Dendritic cell treated with granulocyte-macrophage colony-stimulating factor and Interleukin-4, amounts not matched to agents 40 ng/mL and 50 ng/mL, for 4 days (primary cell): ENCODE measurements at regions of chr21 and their contacts with region 1.

Region 1: DNA sequence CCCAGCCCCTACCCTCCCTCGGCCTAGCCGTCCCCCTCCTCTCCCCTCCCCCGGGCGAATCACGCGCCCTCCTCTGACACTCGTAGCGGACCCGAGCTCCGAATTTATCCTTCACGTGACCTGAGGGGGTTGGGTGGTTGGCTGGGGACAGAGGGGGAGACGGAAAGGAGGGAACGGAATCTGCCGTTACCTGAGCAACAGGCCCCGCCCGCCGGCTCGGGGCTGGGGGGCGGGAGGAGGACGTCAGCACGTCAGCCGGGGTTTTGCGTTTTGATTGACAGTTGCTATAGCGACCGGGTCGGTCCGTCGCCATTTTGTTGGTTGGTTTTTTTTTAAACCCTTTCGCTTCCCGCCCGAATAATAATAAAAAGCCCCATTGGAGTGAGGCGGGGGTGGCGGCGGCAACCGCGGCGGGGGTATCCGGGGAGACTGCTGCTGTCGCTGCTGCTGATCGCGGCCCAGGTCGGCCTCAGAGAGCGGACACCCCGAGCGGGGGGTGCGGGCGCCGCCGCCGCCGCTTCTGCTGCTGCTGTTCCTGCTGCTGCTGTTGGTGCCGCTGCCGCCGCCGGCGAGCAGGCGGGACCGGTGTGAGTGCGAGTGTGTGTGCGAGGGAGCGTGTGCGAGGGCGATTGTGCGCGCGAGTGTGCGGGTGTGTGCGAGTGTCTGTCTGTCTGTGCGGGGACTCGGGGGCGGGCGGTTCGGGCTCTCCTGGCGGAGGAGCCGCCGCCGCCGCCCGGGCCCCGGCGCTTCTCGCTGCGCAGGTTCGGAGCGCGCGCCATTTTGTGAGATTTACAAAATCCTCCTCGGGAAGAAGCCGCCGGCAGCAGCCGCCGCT is at the start of gene DYRK1A:
- H3K4me3 Mint-ChIP-seq: peak within 1 kb of the TSS; percentile 98
- H3K27ac Mint-ChIP-seq: peak within 1 kb of the TSS; percentile 100
- H3K4me1 Mint-ChIP-seq: peaks cover 23% of the 10 kb centered on the region
- H3K27me3 Mint-ChIP-seq: no peaks in the 10 kb centered on the region

Region 2: DNA sequence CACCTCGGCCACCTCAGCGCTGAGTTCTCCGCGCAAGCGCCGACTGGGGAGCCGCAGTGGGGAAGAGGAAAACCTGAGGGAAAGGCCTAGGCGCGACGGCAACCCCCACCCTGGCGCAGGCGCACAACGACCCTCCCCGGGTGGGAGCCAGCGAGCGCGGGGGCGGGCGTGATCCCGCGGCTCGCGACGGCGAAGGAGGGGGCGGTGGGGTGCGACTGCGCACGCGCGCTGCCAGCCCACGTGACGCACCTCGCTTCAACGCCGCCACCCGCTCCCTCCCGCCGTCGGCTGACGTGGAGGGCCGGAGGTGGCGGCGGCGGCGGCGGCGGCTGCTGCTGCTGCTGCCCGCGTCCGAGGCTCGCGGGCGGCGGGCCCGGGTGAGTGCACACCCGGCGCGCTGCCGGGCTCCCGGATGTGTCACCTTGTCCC is 293.7 kb before region 1 on chr21 and contains the starts of genes PIGP and TTC3:
- intact Hi-C with region 1: loop called (anchors 10 kb)
- H3K4me3 Mint-ChIP-seq: peak within 1 kb of the TSS; percentile 96
- H3K27ac Mint-ChIP-seq: peak within 1 kb of the TSS; percentile 92
- H3K4me1 Mint-ChIP-seq: peaks cover 41% of the 10 kb centered on the region
- H3K27me3 Mint-ChIP-seq: no peaks in the 10 kb centered on the region

Region 3: GRCh38 chr21:37145635-37146111 is 221.0 kb before region 1 on chr21:
- intact Hi-C with region 1: no loop called
- H3K4me3 Mint-ChIP-seq: no peak overlapping the region
- H3K27ac Mint-ChIP-seq: no peak overlapping the region
- H3K4me1 Mint-ChIP-seq: no peaks in the 10 kb centered on the region
- H3K27me3 Mint-ChIP-seq: no peaks in the 10 kb centered on the region

Region 4: DNA sequence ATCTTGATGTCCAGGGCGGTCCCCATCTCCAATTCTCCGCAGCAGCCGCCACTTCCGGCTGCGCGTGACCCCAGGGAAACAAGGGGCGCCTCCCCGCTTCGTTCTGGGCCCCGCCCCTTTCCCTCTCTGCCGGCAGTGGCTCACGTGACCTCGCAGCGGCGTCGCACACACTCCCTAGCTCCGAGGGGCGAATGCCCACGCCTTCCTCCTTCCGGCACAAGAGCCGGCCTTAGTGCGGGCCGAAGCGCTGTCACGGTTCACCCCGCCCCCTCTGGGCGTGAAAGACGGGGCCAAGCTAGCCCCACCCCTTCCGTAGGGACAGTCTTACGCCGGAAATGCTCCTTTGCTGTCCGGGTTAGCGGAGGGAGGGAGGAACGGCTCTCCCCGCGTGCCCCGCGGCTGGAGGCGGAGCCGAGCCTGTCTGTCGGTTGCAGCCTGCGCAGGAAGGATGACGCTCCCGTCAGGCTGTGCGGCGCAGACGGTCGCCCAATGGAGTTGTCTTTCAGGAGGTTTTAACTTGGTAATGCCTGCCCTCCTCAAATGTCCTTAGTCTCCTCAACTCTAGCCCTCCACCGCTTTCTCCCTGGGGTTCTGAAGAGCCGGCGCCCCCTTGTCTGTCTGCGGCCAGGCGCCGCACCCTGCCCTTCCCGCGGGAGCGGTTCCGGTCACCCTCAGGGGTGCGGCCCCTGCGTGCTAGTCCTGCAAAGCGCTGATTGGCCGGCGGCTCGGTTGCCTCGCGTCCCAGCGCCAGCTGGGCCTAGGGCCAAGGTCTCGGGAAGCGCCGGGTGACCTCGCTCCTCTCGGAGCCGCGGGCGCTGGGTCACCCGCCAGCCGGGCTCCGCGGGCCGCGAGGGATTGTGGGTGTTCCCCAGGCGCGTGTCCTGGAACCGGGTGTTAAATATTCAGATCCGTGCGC is 99.2 kb before region 1 on chr21 and contains the start of gene VPS26C:
- intact Hi-C with region 1: loop called (anchors 1 kb)
- H3K4me3 Mint-ChIP-seq: peak within 1 kb of the TSS; percentile 88
- H3K27ac Mint-ChIP-seq: peak within 1 kb of the TSS; percentile 99
- H3K4me1 Mint-ChIP-seq: peaks cover 19% of the 10 kb centered on the region
- H3K27me3 Mint-ChIP-seq: no peaks in the 10 kb centered on the region

Region 5: GRCh38 chr21:37407719-37408420 is 41.2 kb after region 1 on chr21:
- intact Hi-C with region 1: loop called (anchors 5 kb)
- H3K4me3 Mint-ChIP-seq: no peak overlapping the region
- H3K27ac Mint-ChIP-seq: peak overlapping the region; percentile 38
- H3K4me1 Mint-ChIP-seq: peaks cover 59% of the 10 kb centered on the region
- H3K27me3 Mint-ChIP-seq: no peaks in the 10 kb centered on the region

Region 6: DNA sequence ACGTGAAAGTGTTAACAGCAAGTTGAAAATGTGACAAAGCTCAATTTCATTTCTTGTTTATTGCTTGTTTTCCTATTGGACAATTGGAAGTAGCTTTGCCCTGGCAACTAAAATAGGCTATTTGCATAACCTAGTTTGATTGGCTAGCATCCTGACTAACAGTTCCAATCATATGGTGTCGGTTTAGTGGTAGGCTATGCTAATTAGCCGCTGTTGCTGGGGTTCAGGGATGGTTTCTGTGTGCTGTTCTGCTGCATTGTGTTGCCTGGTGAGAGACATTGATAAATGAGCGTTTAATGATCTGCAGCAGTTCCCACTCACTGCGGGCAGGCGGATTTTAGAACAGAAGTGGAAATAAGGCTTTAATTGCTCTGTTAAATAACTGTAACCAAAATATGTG is 68.4 kb after region 1 on chr21:
- intact Hi-C with region 1: loop called (anchors 2 kb)
- H3K4me3 Mint-ChIP-seq: no peak overlapping the region
- H3K27ac Mint-ChIP-seq: no peak overlapping the region
- H3K4me1 Mint-ChIP-seq: peaks cover 43% of the 10 kb centered on the region
- H3K27me3 Mint-ChIP-seq: no peaks in the 10 kb centered on the region

Region 7: GRCh38 chr21:37563641-37564340 is 197.1 kb after region 1 on chr21:
- intact Hi-C with region 1: loop called (anchors 5 kb)
- H3K4me3 Mint-ChIP-seq: peak overlapping the region; percentile 88
- H3K27ac Mint-ChIP-seq: peak overlapping the region; percentile 92
- H3K4me1 Mint-ChIP-seq: peaks cover 30% of the 10 kb centered on the region
- H3K27me3 Mint-ChIP-seq: peaks cover 6% of the 10 kb centered on the region

Region 8: DNA sequence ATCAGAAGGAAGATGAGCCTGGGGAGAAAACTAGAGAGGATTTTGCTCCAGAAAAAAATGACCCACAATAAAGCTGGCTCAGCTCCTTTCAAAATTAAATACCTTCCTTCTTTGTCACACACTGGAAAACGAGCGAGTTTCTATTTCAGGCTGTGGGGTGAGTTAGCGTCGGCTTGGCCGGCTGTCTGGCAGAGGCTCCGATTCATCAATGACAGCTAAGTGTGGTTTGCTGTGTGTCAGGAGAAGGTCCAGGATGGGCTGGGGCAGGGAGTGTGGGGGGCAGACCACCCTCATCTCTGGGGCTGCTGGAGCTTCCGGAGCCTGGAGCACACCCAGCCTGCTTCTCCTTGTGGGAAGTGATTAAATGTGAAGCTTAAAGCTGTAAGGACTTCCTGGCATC is 1559.2 kb after region 1 on chr21:
- intact Hi-C with region 1: no loop called
- H3K4me3 Mint-ChIP-seq: peak overlapping the region; percentile 86
- H3K27ac Mint-ChIP-seq: peak overlapping the region; percentile 83
- H3K4me1 Mint-ChIP-seq: peaks cover 27% of the 10 kb centered on the region
- H3K27me3 Mint-ChIP-seq: peaks cover 29% of the 10 kb centered on the region